ENCODE measurements at regions of chr7 and their contacts with region 1.

Region 1: GRCh38 chr7:139651308-139651707 is 126.5 kb downstream of the HIPK2 start:
- DNase-seq: peak in 4 of 7 donors; percentile 31 to 50 (median 44)
- H3K4me3 ChIP-seq: no peak overlapping the region
- H3K27ac ChIP-seq: peak overlapping the region in 1 of 5 donors; percentile 46
- H3K4me1 ChIP-seq: peaks cover 0 to 27% of the 10 kb centered on the region in 2 donors
- H3K27me3 ChIP-seq: no peaks in the 10 kb centered on the region
- CTCF ChIP-seq: no peak
- POLR2A ChIP-seq: no peak

Region 2: GRCh38 chr7:139777948-139778841 is 126.9 kb after region 1 on chr7 and contains the start of gene HIPK2:
- intact Hi-C with region 1: loop called in 1 of 2 experiments (anchors 10 kb)
- DNase-seq: peak; percentile 75 to 83 (median 79)
- H3K4me3 ChIP-seq: peak within 1 kb of the TSS in 3 of 4 donors; percentile 35 to 95 (median 88)
- H3K27ac ChIP-seq: peak within 1 kb of the TSS; percentile 11 to 98 (median 89)
- H3K4me1 ChIP-seq: peaks cover 18 to 23% of the 10 kb centered on the region in 2 donors
- H3K27me3 ChIP-seq: no peaks in the 10 kb centered on the region
- CTCF ChIP-seq: no peak
- POLR2A ChIP-seq: no peak
- total RNA-seq, gene HIPK2: 10.3 to 82.4 (median 55.2) TPM

Measured in adrenal gland (tissue), 19 donors.